Panc1 (cell line): ENCODE measurements at regions of chr1 and their contacts with region 1.

Region 1: GRCh38 chr1:164576291-164577271 is 17.6 kb downstream of the PBX1 start:
- DNase-seq: no peak
- ATAC-seq: no peak
- H3K4me3 ChIP-seq: no peak overlapping the region
- H3K27ac ChIP-seq: no peak overlapping the region
- H3K4me1 ChIP-seq: no peaks in the 10 kb centered on the region
- H3K27me3 ChIP-seq: no peaks in the 10 kb centered on the region
- CTCF ChIP-seq: no peak

Region 2: GRCh38 chr1:165265196-165265838 is 688.7 kb after region 1 on chr1:
- CTCF ChIA-PET with region 1: interaction called, 10 read pairs
- POLR2A ChIA-PET with region 1: no interaction called
- in situ Hi-C with region 1: no loop called
- intact Hi-C with region 1: no loop called
- DNase-seq: no peak
- ATAC-seq: no peak
- H3K4me3 ChIP-seq: no peak overlapping the region
- H3K27ac ChIP-seq: no peak overlapping the region
- H3K4me1 ChIP-seq: no peaks in the 10 kb centered on the region
- H3K27me3 ChIP-seq: no peaks in the 10 kb centered on the region
- CTCF ChIP-seq: no peak